ENCODE measurements at regions of chr11 and their contacts with region 1.

Region 1: DNA sequence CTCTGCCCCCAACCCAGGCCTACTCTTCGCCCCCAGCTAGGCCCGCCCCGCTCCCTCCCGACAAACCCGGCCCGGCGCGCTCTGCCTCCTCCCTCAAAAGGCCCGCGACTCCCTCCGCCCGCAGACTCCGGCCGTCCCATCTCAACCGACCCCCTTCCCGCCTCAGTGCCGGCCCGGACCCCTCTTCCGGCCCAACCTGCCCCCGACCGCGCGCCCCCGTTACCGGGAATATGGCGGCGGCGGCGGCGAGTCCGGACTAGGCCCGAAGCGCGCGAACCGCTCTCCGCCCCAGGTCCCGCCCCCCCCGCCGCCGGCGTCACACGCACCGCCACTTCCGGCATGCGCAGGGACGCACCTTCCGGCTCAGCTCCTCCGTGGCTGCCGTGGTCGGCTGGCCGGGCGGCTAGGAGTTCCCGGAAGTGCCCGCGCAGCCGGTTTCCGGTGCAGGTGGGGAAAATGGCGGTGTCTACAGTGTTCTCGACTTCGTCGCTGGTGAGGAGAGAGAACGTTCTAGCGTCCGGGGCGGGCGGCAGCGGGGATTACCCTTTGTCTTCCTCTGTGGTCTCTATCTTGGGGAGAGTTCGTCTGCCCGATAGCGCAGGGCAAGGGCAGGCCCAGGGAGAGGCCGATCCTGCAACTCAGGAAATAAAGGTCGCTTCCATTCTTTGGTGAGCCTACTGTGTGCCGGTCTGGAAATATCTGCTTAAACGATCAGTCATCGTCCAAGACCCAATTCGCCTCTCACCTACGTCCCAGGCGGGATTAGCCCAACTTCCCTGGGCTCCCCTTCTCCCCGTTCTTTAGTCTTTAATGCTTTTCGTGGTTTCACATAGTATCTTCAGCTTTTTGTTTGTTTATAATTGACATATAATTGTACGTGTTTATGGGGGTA is at the starts of genes CPSF7 and SDHAF2:
- DNase-seq: peak; percentile 99
- ATAC-seq: peak; percentile 83
- H3K4me3 Mint-ChIP-seq: peak within 1 kb of the TSS; percentile 99
- H3K27ac Mint-ChIP-seq: peak within 1 kb of the TSS; percentile 99
- H3K4me1 Mint-ChIP-seq: peaks cover 59% of the 10 kb centered on the region
- H3K27me3 Mint-ChIP-seq: no peaks in the 10 kb centered on the region
- CTCF ChIP-seq: no peak
- total RNA-seq, gene CPSF7: 109 and 124 TPM in 2 replicates
- total RNA-seq, gene SDHAF2: 51.0 and 51.9 TPM in 2 replicates

Region 2: DNA sequence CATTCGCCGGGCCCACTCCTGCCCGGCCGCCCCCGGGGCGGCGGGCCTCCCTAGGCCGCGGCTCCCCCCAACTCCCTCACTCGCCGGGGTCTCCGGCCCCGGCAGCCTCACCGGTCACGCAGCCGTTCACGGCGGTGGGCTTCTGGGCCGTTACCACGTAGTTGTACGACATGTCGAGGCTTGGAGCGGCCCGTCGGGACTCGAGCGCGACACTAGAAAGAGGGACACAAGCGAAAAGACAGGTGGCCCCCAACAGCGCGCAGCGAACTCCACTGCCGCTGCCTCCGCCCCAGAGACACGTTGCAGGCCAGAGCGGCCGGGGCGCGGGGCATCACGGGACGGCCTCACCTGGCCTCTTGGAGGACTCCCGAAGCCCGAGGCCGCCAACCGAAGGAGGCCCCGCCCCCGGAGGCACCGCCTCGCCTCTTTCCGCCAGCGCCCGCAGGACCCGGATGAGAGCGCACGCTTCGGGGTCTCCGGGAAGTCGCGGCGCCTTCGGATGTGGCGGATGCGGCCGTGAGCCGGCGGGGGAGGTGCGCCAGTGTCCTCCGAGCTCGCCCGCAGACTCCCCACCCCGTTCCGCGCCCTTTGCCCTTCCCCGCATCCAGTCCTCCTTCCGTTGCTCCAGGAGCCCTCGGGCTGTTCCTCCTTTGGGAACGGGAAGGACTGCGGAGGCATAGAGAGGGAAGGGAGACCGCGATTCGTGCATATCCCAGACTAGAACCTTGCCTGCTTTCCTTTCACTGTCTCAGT is 97.0 kb before region 1 on chr11 and contains the starts of genes DDB1 and TKFC:
- CTCF ChIA-PET with region 1: interaction called, 29 read pairs
- POLR2A ChIA-PET with region 1: interaction called, 22 read pairs
- intact Hi-C with region 1: loop called (anchors 1 kb)
- DNase-seq: peak; percentile 85
- ATAC-seq: peak; percentile 92
- H3K4me3 Mint-ChIP-seq: peak within 1 kb of the TSS; percentile 92
- H3K27ac Mint-ChIP-seq: peak within 1 kb of the TSS; percentile 93
- H3K4me1 Mint-ChIP-seq: peaks cover 49% of the 10 kb centered on the region
- H3K27me3 Mint-ChIP-seq: no peaks in the 10 kb centered on the region
- CTCF ChIP-seq: no peak
- total RNA-seq, gene DDB1: 201 and 218 TPM in 2 replicates
- total RNA-seq, gene TKFC: 59.8 and 63.9 TPM in 2 replicates

Region 3: DNA sequence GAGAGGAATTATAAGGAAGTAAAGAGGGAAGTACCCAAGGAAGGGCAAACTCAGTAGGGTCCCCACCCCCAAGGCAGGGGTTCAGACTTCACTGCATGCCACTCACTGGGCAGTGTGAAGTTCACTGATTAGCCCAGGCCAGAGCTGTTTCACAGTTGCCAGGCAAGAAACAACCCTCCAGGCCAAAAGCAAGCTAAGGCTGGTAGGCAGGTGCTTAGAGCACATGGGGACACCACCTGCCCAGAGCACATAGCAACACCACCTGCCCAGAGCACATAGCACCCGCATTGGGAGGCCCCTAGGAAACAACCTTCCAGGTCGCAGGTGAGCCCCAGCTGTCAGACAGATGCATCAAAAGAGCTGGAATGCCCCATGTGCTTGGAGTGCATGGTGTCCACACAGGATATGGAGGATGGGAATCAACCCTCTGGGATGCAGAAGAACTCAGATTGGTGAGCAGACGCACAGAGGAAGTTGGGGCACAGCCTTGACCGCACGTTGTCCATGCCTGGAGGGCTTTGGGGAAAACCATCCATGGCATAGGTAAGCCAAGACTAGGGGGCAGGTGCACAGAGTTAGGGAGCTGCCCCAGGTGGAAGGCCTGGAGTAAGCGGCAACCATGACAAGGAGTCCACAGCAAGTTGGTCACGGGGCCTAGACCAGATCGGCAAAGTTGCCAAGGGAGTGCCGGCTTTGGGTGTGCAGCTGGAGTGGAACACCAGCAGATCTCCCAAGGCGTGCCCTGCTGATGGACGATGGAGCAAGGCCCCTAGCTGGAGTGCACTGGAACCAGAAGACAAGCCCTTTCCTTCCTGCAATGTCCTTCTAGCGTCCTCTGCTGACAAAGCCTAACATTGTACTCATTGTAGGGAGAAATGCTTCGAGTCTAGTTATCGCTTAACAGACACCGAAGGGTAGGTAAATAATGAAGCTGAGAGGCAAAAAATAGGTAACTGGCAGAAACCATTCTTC is 45.4 kb before region 1 on chr11:
- CTCF ChIA-PET with region 1: interaction called, 12 read pairs
- POLR2A ChIA-PET with region 1: interaction called, 18 read pairs
- intact Hi-C with region 1: no loop called
- DNase-seq: no peak
- ATAC-seq: no peak
- H3K4me3 Mint-ChIP-seq: no peak overlapping the region
- H3K27ac Mint-ChIP-seq: peak overlapping the region; percentile 56
- H3K4me1 Mint-ChIP-seq: peaks cover 10% of the 10 kb centered on the region
- H3K27me3 Mint-ChIP-seq: no peaks in the 10 kb centered on the region
- CTCF ChIP-seq: no peak

Region 4: DNA sequence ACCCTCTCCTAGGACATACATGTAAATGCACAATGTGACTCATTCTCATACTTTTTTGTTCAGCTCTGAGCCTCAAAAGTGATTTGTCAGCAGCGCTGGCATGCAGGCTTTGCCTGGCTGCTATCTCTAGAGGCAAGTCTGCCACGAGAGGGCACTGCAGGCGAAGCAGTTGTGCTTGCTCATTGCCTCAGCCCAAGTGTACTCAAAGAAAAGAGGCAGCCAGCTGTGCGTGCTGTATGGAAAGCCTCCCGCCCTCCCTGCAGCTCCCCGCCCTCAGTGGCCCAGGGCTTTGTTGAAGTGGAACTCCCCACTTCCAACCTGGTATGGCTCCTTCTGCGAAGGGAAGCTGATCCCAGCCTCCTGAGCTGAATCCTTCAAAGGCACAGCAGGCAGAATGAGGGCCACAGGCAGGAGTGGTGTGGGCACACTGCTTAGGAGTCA is 16.3 kb after region 1 on chr11:
- CTCF ChIA-PET with region 1: interaction called, 26 read pairs
- POLR2A ChIA-PET with region 1: interaction called, 8 read pairs
- intact Hi-C with region 1: no loop called
- DNase-seq: peak; percentile 27
- ATAC-seq: peak; percentile 82
- H3K4me3 Mint-ChIP-seq: no peak overlapping the region
- H3K27ac Mint-ChIP-seq: no peak overlapping the region
- H3K4me1 Mint-ChIP-seq: no peaks in the 10 kb centered on the region
- H3K27me3 Mint-ChIP-seq: no peaks in the 10 kb centered on the region
- CTCF ChIP-seq: no peak

Region 5: GRCh38 chr11:61667684-61668305 is 237.9 kb after region 1 on chr11:
- CTCF ChIA-PET with region 1: no interaction called
- POLR2A ChIA-PET with region 1: no interaction called
- intact Hi-C with region 1: no loop called
- DNase-seq: no peak
- ATAC-seq: no peak
- H3K4me3 Mint-ChIP-seq: no peak overlapping the region
- H3K27ac Mint-ChIP-seq: no peak overlapping the region
- H3K4me1 Mint-ChIP-seq: no peaks in the 10 kb centered on the region
- H3K27me3 Mint-ChIP-seq: peaks cover 13% of the 10 kb centered on the region
- CTCF ChIP-seq: no peak

Measured in activated B cell treated with CpG ODN at 0.5 μM for 24 hours (primary cell).